GM12878 (cell line): ENCODE measurements at regions of chr1 and their contacts with region 1.

Region 1: GRCh38 chr1:193190096-193190744 is 3.8 kb upstream of the B3GALT2 start:
- DNase-seq: no peak
- ATAC-seq: peak; percentile 59
- H3K4me3 ChIP-seq: no peak overlapping the region
- H3K27ac ChIP-seq: no peak overlapping the region
- H3K4me1 ChIP-seq: no peaks in the 10 kb centered on the region
- H3K27me3 ChIP-seq: no peaks in the 10 kb centered on the region
- CTCF ChIP-seq: peak in 2 of 3 experiments; percentile 22 to 38; a peak in 2 of 6 replicates
- EP300 ChIP-seq: no peak
- POLR2A ChIP-seq: no peak
- RAD21 ChIP-seq: peak; percentile 55

Region 2: GRCh38 chr1:193201021-193201420 is 10.8 kb after region 1 on chr1:
- CTCF ChIA-PET with region 1: interaction called, 11 read pairs
- POLR2A ChIA-PET with region 1: no interaction called
- RAD21 ChIA-PET with region 1: interaction called, 3 read pairs
- SMC1A ChIA-PET with region 1: interaction called, 4 read pairs
- in situ Hi-C with region 1: no loop called
- intact Hi-C with region 1: no loop called
- DNase-seq: no peak
- ATAC-seq: no peak; the same call in 2 of the 3 replicates
- H3K4me3 ChIP-seq: no peak overlapping the region
- H3K27ac ChIP-seq: no peak overlapping the region
- H3K4me1 ChIP-seq: no peaks in the 10 kb centered on the region
- H3K27me3 ChIP-seq: no peaks in the 10 kb centered on the region
- CTCF ChIP-seq: no peak
- EP300 ChIP-seq: no peak
- POLR2A ChIP-seq: no peak
- RAD21 ChIP-seq: no peak

Region 3: DNA sequence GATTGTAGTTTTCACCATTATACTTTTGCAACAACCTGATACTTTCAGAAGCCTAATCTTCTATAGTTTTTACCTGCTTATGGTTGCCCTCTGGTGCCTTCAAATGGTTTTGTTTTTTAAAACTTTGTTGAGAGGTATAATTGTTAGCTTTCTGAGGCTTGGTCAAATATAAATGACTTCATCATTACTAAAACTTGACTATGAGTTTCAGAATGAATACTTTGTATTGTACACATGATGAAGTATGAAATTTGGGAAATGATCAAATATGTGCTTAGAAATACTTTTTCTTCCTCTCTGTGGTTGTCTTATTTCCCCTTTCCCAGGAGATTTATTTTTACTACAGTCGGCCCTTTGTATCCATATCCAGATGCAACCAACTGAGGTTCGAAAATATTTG is 148.0 kb after region 1 on chr1:
- CTCF ChIA-PET with region 1: interaction called, 26 read pairs
- POLR2A ChIA-PET with region 1: no interaction called
- RAD21 ChIA-PET with region 1: interaction called, 17 read pairs
- SMC1A ChIA-PET with region 1: interaction called, 17 read pairs
- in situ Hi-C with region 1: no loop called
- intact Hi-C with region 1: no loop called
- DNase-seq: no peak
- ATAC-seq: peak; percentile 91
- H3K4me3 ChIP-seq: no peak overlapping the region
- H3K27ac ChIP-seq: no peak overlapping the region
- H3K4me1 ChIP-seq: no peaks in the 10 kb centered on the region; the same call in 1 of the 2 replicates
- H3K27me3 ChIP-seq: no peaks in the 10 kb centered on the region
- CTCF ChIP-seq: peak in 2 of 3 experiments; percentile 15 to 34; a peak in 1 of 6 replicates
- EP300 ChIP-seq: no peak
- POLR2A ChIP-seq: no peak
- RAD21 ChIP-seq: peak; percentile 68